CD8-positive, alpha-beta T cell (primary cell): ENCODE measurements at regions of chr6 and their contacts with region 1.

Region 1: GRCh38 chr6:138001750-138002349 is 105.4 kb downstream of the PERP start:
- DNase-seq: peak; percentile 39 to 75 (median 68)
- ATAC-seq: peak; percentile 54
- H3K4me3 ChIP-seq: no peak overlapping the region
- H3K4me3 Mint-ChIP-seq: no peak overlapping the region
- H3K27ac ChIP-seq: no peak overlapping the region
- H3K27ac Mint-ChIP-seq: no peak overlapping the region
- H3K4me1 ChIP-seq: no peaks in the 10 kb centered on the region
- H3K4me1 Mint-ChIP-seq: peaks cover 8% of the 10 kb centered on the region
- H3K27me3 ChIP-seq: no peaks in the 10 kb centered on the region
- H3K27me3 Mint-ChIP-seq: no peaks in the 10 kb centered on the region
- CTCF ChIP-seq: peak; percentile 88

Region 2: DNA sequence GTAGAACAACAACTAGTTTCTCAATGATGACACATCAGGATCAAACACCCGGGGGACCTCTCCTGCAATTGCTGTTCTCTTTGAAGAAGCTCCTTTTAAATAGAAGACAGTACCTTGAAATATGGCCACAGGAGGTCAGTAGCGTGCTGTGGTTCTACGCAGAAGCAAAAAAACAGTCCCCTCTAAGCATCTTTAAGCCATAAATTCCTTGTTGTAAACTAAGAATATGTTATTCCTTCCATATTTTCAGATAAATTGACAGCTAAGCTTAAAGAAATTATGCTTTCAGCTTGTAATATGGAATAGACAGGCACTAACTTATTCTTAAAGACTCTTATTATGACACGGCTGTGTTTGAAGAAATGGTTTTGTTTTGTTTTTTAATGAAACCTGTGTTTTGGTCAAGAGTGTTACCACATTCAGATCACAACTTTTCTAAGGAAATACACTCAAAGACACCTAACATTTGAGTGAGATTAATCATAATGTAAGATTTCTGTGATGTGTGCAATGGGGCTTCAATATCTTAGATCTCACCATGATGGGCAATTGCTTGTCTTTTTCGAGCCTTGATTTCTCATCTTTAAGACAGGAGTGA is 907.3 kb before region 1 on chr6:
- CTCF ChIA-PET with region 1: interaction called, 4 read pairs
- POLR2A ChIA-PET with region 1: no interaction called
- intact Hi-C with region 1: loop called in 1 of 2 experiments (anchors 10 kb)
- DNase-seq: peak; percentile 14 to 79 (median 54)
- ATAC-seq: peak; percentile 67
- H3K4me3 ChIP-seq: no peak overlapping the region
- H3K4me3 Mint-ChIP-seq: no peak overlapping the region
- H3K27ac ChIP-seq: no peak overlapping the region
- H3K27ac Mint-ChIP-seq: peak overlapping the region; percentile 37
- H3K4me1 ChIP-seq: no peaks in the 10 kb centered on the region
- H3K4me1 Mint-ChIP-seq: peaks cover 18% of the 10 kb centered on the region
- H3K27me3 ChIP-seq: no peaks in the 10 kb centered on the region
- H3K27me3 Mint-ChIP-seq: peaks cover 3% of the 10 kb centered on the region
- CTCF ChIP-seq: peak; percentile 71

Region 3: DNA sequence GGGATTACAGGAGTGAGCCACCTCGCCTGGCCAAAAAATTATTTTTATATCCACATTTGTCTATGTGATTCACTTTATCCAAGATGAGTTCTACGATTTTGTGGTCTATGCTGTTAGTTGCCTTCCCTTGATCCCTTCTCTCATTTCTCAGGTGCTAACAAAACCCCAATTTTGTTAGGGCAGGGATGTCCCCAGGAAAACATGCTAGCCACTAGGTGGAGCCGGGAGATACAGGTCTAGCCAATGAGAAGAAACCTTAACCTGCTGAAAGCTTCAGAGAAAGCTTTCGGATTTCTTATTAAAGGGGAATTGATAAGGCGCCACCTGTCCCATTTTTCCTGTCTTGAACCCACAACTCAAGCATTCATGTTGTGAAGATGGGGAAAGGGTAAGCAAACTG is 340.2 kb before region 1 on chr6:
- CTCF ChIA-PET with region 1: interaction called, 12 read pairs
- POLR2A ChIA-PET with region 1: no interaction called
- intact Hi-C with region 1: no loop called
- DNase-seq: peak in 8 of 9 experiments; percentile 22 to 72 (median 48)
- ATAC-seq: no peak
- H3K4me3 ChIP-seq: no peak overlapping the region
- H3K4me3 Mint-ChIP-seq: no peak overlapping the region
- H3K27ac ChIP-seq: no peak overlapping the region
- H3K27ac Mint-ChIP-seq: no peak overlapping the region
- H3K4me1 ChIP-seq: no peaks in the 10 kb centered on the region
- H3K4me1 Mint-ChIP-seq: no peaks in the 10 kb centered on the region
- H3K27me3 ChIP-seq: no peaks in the 10 kb centered on the region
- H3K27me3 Mint-ChIP-seq: no peaks in the 10 kb centered on the region
- CTCF ChIP-seq: peak; percentile 26

Region 4: DNA sequence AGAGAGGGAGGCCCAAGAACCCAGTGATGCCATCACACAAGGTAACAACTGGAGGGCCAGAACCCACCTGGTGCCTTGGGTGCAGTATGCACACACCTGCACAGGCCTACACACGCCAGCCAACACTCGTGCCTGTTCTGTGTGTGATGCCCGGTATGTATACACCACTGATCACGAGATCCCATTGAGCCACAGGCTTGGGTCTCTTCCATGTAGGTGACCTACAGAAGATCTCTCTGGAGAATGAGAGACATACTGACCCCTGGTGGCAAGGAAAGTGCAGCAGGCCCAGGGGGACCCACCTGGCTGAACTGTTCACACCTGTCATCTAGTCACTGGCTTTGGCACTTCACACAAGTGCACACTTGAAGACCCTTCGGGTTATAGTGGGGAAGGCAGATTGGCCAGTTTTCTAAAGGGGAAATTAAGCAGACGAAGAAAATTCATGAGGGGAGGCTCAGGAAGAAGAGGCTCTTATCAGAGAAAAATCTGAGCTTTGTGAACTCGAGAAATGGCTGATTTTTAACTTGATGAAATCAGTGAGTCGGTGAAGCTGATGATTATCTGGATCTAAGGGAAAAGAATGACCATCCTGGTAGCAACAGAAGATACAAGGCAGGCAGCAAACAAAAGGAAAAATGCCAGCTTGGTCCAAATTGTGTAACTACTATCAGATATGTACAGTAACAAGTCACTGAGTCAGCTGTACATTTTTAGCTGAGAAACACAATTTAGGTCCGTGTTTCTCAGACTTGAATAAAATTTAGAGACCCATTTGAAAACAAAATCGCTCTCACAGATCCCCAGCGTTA is 285.5 kb after region 1 on chr6:
- CTCF ChIA-PET with region 1: no interaction called
- POLR2A ChIA-PET with region 1: no interaction called
- intact Hi-C with region 1: loop called in 1 of 2 experiments (anchors 2 kb)
- DNase-seq: peak in 8 of 9 experiments; percentile 31 to 59 (median 48)
- ATAC-seq: peak; percentile 46
- H3K4me3 ChIP-seq: no peak overlapping the region
- H3K4me3 Mint-ChIP-seq: no peak overlapping the region
- H3K27ac ChIP-seq: no peak overlapping the region
- H3K27ac Mint-ChIP-seq: no peak overlapping the region
- H3K4me1 ChIP-seq: no peaks in the 10 kb centered on the region
- H3K4me1 Mint-ChIP-seq: no peaks in the 10 kb centered on the region
- H3K27me3 ChIP-seq: no peaks in the 10 kb centered on the region
- H3K27me3 Mint-ChIP-seq: peaks cover 1% of the 10 kb centered on the region
- CTCF ChIP-seq: peak; percentile 47

Region 5: DNA sequence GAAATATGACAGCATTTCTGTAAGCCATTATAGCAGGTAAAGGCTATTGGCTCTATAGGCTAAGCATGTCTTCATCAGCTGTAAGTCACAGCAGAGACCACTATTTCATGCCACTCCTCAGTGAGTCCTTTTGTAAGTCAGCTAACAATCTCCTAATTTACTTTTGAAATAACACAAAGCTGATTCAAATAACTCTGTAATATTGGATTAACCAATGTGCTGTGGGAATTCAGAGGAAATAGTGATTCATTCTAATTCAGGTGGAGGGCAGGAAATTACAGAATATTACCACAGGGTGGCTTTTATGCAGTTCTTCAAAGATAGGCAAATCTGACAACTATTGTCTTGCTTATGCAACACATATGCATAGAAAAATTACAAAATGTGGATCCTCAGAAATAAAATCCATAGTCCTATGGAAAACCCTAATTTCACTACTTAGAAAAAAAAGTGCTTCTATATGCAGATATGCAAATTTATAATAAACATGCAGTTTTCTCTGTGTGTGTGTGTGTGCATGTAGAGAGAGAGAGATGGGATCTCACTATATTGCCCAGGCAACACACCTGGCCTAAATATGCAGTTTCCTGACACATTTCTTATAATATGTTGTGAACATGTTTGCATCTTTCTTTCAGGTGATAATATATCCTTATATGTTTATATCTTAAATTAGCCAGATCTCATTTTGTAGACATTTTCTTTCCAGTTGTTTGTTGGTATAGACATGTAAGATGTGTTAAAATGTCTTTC is 371.0 kb after region 1 on chr6:
- CTCF ChIA-PET with region 1: no interaction called
- POLR2A ChIA-PET with region 1: no interaction called
- intact Hi-C with region 1: loop called in 1 of 2 experiments (anchors 10 kb)
- DNase-seq: peak in 1 of 9 experiments; percentile 23
- ATAC-seq: no peak
- H3K4me3 ChIP-seq: no peak overlapping the region
- H3K4me3 Mint-ChIP-seq: no peak overlapping the region
- H3K27ac ChIP-seq: no peak overlapping the region
- H3K27ac Mint-ChIP-seq: no peak overlapping the region
- H3K4me1 ChIP-seq: no peaks in the 10 kb centered on the region
- H3K4me1 Mint-ChIP-seq: no peaks in the 10 kb centered on the region
- H3K27me3 ChIP-seq: no peaks in the 10 kb centered on the region
- H3K27me3 Mint-ChIP-seq: peaks cover 2% of the 10 kb centered on the region
- CTCF ChIP-seq: peak; percentile 8

Region 6: DNA sequence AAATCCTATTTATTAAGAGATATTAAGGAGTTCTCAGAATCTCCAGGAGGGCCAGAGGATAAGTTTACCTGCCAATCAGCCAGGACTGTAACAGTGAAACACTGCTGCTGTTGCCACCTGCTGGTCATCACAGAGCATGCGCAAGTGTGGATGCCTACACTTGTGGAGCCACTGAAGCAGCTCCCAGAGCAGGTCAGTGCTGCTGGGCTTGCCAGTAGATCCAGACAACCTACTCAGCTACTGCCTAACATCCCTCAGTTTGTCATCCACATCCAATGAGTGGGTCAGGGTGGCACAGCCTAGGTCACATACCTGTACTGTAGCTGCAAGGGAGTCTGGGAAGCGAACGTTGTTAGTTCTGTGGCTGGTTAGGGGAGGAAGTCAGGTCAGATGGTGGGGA is 515.8 kb after region 1 on chr6:
- CTCF ChIA-PET with region 1: interaction called, 3 read pairs
- POLR2A ChIA-PET with region 1: no interaction called
- intact Hi-C with region 1: loop called (anchors 5 kb)
- DNase-seq: peak; percentile 10 to 74 (median 57)
- ATAC-seq: peak; percentile 74
- H3K4me3 ChIP-seq: no peak overlapping the region
- H3K4me3 Mint-ChIP-seq: no peak overlapping the region
- H3K27ac ChIP-seq: no peak overlapping the region
- H3K27ac Mint-ChIP-seq: no peak overlapping the region
- H3K4me1 ChIP-seq: no peaks in the 10 kb centered on the region
- H3K4me1 Mint-ChIP-seq: peaks cover 7% of the 10 kb centered on the region
- H3K27me3 ChIP-seq: no peaks in the 10 kb centered on the region
- H3K27me3 Mint-ChIP-seq: peaks cover 8% of the 10 kb centered on the region
- CTCF ChIP-seq: peak; percentile 84

Region 7: GRCh38 chr6:138765896-138766655 is 764.2 kb after region 1 on chr6:
- CTCF ChIA-PET with region 1: no interaction called
- POLR2A ChIA-PET with region 1: no interaction called
- intact Hi-C with region 1: loop called in 1 of 2 experiments (anchors 10 kb)
- DNase-seq: peak in 2 of 9 experiments; percentile 34 to 52
- ATAC-seq: no peak
- H3K4me3 ChIP-seq: no peak overlapping the region
- H3K4me3 Mint-ChIP-seq: no peak overlapping the region
- H3K27ac ChIP-seq: no peak overlapping the region
- H3K27ac Mint-ChIP-seq: no peak overlapping the region
- H3K4me1 ChIP-seq: no peaks in the 10 kb centered on the region
- H3K4me1 Mint-ChIP-seq: no peaks in the 10 kb centered on the region
- H3K27me3 ChIP-seq: no peaks in the 10 kb centered on the region
- H3K27me3 Mint-ChIP-seq: no peaks in the 10 kb centered on the region
- CTCF ChIP-seq: peak; percentile 86